Cardiac septum (tissue), 1 donor: ENCODE measurements at regions of chr4 and their contacts with region 1.

Region 1: DNA sequence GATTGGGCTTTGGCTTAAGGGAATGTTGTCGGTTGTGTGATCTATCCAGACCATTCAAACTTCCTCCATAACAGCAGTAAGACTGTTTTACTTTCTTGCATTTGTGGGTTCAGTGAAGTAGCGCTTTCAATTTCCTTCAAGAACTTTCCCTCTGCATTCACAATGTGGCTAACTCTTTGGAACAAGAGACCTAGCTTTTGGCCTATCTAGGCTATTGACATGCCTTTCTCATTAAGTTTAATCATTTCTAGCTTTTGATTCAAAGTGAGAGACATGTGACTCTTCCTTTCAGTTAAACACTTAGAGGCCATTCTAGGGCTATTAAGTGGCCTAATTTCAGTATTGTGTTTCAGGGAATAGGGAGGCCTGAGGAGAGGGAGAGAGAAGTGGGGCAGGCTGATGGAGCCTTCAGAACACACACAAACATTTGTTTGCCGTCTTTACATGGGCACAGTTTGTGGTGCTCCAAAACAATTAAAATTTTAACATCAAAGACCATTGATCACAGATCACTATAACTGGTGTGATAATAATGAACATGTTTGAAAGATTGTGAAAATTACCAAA is 34.1 kb downstream of the ADH5 start:
- DNase-seq: no peak

Region 2: DNA sequence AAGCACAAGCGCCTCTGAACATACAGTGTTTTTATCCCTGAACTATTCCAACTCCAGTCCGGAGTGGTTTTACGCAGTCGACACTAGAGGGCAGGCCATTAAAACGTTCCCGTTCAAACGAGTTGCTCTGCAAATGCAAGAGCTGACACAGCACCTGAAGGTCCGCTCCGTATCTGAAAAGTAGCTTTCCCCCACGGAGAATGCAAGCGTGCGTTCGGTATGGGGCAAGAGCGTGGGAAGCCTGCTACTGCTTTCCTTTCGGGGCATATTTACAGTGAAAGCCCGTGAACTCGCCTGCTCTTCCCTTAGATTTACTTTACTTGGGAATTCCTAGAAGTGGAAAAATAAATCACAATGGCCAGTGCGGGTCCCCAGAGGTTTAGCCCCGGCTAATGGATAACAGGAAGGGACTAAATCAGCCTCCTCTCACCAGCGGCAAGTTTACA is 586.9 kb before region 1 on chr4:
- intact Hi-C with region 1: loop called (anchors 5 kb)
- DNase-seq: no peak

Region 3: GRCh38 chr4:98838977-98839618 is 215.4 kb before region 1 on chr4:
- intact Hi-C with region 1: loop called (anchors 10 kb)
- DNase-seq: no peak

Region 4: GRCh38 chr4:98939892-98940298 is 114.6 kb before region 1 on chr4:
- intact Hi-C with region 1: loop called (anchors 5 kb)
- DNase-seq: no peak

Region 5: GRCh38 chr4:98995183-98996055 is 59.1 kb before region 1 on chr4 and contains the start of gene METAP1:
- intact Hi-C with region 1: loop called (anchors 2 kb)
- DNase-seq: peak; percentile 97
- total RNA-seq, gene METAP1: 56.2 TPM

Region 6: GRCh38 chr4:99088481-99089365 is 34.2 kb after region 1 on chr4 and contains the start of gene ADH5:
- intact Hi-C with region 1: loop called (anchors 2 kb)
- DNase-seq: peak; percentile 92
- total RNA-seq, gene ADH5: 132 TPM